Natural killer cell (primary cell): ENCODE measurements at regions of chr13 and their contacts with region 1.

Region 1: GRCh38 chr13:48037346-48038173 is at the start of gene NUDT15:
- DNase-seq: peak; percentile 90 to 100
- ATAC-seq: peak; percentile 92 to 99 (median 92)
- H3K4me3 ChIP-seq: peak within 1 kb of the TSS; percentile 56
- H3K4me3 Mint-ChIP-seq: peak within 1 kb of the TSS; percentile 90
- H3K27ac ChIP-seq: peak within 1 kb of the TSS; percentile 94
- H3K27ac Mint-ChIP-seq: peak within 1 kb of the TSS; percentile 97 to 99
- H3K4me1 ChIP-seq: peaks cover 13% of the 10 kb centered on the region
- H3K4me1 Mint-ChIP-seq: peaks cover 21% of the 10 kb centered on the region in 2 donors
- H3K27me3 ChIP-seq: no peaks in the 10 kb centered on the region
- H3K27me3 Mint-ChIP-seq: no peaks in the 10 kb centered on the region
- CTCF ChIP-seq: peak; percentile 99
- total RNA-seq, gene NUDT15: 6.4 to 7.5 (median 6.5) TPM

Region 2: DNA sequence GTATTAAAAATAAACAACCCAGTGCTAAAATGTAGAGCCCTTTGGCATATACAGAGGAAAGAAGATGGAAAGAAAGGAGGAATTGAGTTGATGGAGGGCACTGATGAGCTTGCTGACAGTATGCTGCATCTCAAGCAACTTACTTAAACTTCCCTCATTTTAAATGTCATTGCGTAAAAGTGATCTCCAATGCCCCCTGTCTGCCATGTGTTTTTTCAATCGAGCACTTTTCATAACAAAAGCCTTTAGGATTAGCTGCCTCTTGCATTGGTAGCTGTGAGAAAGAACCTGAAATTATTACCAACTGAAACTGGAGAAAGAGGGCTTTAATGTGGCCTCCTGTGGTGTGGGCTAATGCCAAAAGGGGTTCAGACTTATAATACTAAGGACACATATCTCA is 578.0 kb before region 1 on chr13:
- intact Hi-C with region 1: no loop called
- DNase-seq: no peak
- ATAC-seq: no peak
- H3K4me3 ChIP-seq: no peak overlapping the region
- H3K4me3 Mint-ChIP-seq: no peak overlapping the region
- H3K27ac ChIP-seq: no peak overlapping the region
- H3K27ac Mint-ChIP-seq: no peak overlapping the region
- H3K4me1 ChIP-seq: no peaks in the 10 kb centered on the region
- H3K4me1 Mint-ChIP-seq: no peaks in the 10 kb centered on the region
- H3K27me3 ChIP-seq: no peaks in the 10 kb centered on the region
- H3K27me3 Mint-ChIP-seq: no peaks in the 10 kb centered on the region
- CTCF ChIP-seq: no peak

Region 3: GRCh38 chr13:47803131-47803530 is 234.4 kb before region 1 on chr13:
- intact Hi-C with region 1: no loop called
- DNase-seq: no peak
- ATAC-seq: no peak
- H3K4me3 ChIP-seq: no peak overlapping the region
- H3K4me3 Mint-ChIP-seq: no peak overlapping the region
- H3K27ac ChIP-seq: no peak overlapping the region
- H3K27ac Mint-ChIP-seq: no peak overlapping the region
- H3K4me1 ChIP-seq: no peaks in the 10 kb centered on the region
- H3K4me1 Mint-ChIP-seq: no peaks in the 10 kb centered on the region
- H3K27me3 ChIP-seq: no peaks in the 10 kb centered on the region
- H3K27me3 Mint-ChIP-seq: peaks cover 0 to 3% of the 10 kb centered on the region in 2 donors
- CTCF ChIP-seq: no peak

Region 4: GRCh38 chr13:48000778-48001628 is 36.6 kb before region 1 on chr13 and contains the start of gene SUCLA2:
- intact Hi-C with region 1: loop called (anchors 2 kb)
- DNase-seq: peak; percentile 90 to 94
- ATAC-seq: peak; percentile 99 to 100 (median 99)
- H3K4me3 ChIP-seq: peak within 1 kb of the TSS; percentile 98
- H3K4me3 Mint-ChIP-seq: peak within 1 kb of the TSS; percentile 93
- H3K27ac ChIP-seq: peak within 1 kb of the TSS; percentile 69
- H3K27ac Mint-ChIP-seq: peak within 1 kb of the TSS; percentile 72 to 89
- H3K4me1 ChIP-seq: peaks cover 10% of the 10 kb centered on the region
- H3K4me1 Mint-ChIP-seq: peaks cover 37 to 39% of the 10 kb centered on the region in 2 donors
- H3K27me3 ChIP-seq: no peaks in the 10 kb centered on the region
- H3K27me3 Mint-ChIP-seq: no peaks in the 10 kb centered on the region
- CTCF ChIP-seq: no peak
- total RNA-seq, gene SUCLA2: 28.4 to 34.3 (median 31.0) TPM

Region 5: DNA sequence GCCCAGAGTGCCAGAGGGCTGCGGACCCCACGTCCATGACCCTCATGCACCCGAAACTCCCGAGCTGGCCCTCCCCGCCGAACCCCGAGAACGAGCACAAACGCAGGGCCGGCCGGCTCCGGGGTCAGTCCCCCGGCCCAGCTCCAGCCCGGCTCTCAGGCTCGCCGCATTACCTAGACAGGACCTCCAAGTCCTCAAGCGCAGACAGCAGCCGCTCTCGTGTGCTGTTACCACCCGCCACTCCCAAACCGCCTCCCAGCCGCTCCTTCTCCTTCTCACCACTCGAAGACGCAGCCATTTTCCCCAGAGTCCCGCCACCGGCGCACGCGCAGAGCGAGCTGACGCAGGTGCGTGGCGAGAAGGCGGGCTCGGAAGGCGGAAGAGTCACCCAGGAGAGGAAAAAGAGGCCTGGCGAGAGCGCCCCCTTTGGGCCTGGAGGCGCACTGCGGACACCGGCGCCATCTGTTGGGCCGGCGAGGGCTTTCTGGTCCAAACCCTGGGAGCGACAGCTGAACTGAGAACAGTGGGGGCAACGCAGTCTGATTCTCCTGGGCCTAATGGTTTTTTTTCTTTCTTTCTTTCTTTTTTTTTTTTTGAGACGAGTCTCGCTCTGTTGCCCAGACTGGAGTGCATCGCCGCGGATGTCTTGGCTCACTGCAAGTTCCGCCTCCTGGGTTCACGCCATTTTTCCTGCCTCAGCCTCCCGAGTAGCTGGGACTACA is 57.4 kb after region 1 on chr13 and contains the start of gene MED4:
- intact Hi-C with region 1: loop called (anchors 2 kb)
- DNase-seq: peak; percentile 99
- ATAC-seq: peak; percentile 98 to 100 (median 99)
- H3K4me3 ChIP-seq: peak within 1 kb of the TSS; percentile 78
- H3K4me3 Mint-ChIP-seq: peak within 1 kb of the TSS; percentile 97
- H3K27ac ChIP-seq: peak within 1 kb of the TSS; percentile 74
- H3K27ac Mint-ChIP-seq: peak within 1 kb of the TSS; percentile 92 to 98
- H3K4me1 ChIP-seq: peaks cover 12% of the 10 kb centered on the region
- H3K4me1 Mint-ChIP-seq: peaks cover 34 to 35% of the 10 kb centered on the region in 2 donors
- H3K27me3 ChIP-seq: no peaks in the 10 kb centered on the region
- H3K27me3 Mint-ChIP-seq: peaks cover 3 to 11% of the 10 kb centered on the region in 2 donors
- CTCF ChIP-seq: peak; percentile 99
- total RNA-seq, gene MED4: 58.2 to 59.3 (median 58.4) TPM

Region 6: GRCh38 chr13:48303359-48304142 is 266.0 kb after region 1 on chr13 and contains the start of gene RB1:
- intact Hi-C with region 1: loop called (anchors 5 kb)
- DNase-seq: peak; percentile 90 to 97
- ATAC-seq: peak; percentile 75 to 89 (median 86)
- H3K4me3 ChIP-seq: peak within 1 kb of the TSS; percentile 92
- H3K4me3 Mint-ChIP-seq: peak within 1 kb of the TSS; percentile 89
- H3K27ac ChIP-seq: peak within 1 kb of the TSS; percentile 97
- H3K27ac Mint-ChIP-seq: peak within 1 kb of the TSS; percentile 97 to 98
- H3K4me1 ChIP-seq: peaks cover 12% of the 10 kb centered on the region
- H3K4me1 Mint-ChIP-seq: peaks cover 26 to 33% of the 10 kb centered on the region in 2 donors
- H3K27me3 ChIP-seq: no peaks in the 10 kb centered on the region
- H3K27me3 Mint-ChIP-seq: no peaks in the 10 kb centered on the region
- CTCF ChIP-seq: no peak
- total RNA-seq, gene RB1: 25.5 to 28.3 (median 26.9) TPM